ENCODE measurements at regions of chr20 and their contacts with region 1.

Region 1: DNA sequence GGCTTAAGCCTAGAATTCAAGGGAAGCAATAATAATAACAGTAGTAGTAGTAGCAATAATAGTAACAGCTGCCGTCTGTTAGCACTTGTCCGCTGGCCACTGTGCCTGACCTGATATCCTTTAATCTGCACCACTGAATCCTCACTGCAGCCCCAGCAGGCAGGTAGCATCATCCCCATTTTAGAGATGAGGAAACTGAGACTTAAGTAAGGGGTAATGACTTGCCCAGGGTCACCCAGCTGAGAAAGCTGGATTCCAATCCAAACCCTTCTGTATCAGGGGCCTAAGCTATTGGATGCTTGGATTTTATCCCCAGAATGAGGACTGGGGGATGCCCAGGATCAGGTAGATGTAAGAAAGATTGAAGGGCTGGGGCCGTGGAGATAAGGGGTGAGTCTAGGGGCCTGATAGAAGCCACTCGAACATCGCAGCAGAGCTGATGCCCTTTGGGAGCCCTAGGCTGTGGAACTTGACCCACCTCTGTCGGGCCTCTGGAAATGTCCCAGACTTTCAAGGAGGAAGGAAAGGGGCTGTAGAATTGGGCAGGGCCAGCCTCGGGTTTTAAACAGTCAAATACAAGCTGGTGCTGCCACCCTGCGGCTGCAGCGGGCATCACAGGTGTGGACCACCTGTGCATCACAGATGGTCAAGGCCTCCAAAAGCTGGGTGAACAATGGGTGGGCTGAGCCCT is 102.1 kb upstream of the MYL9 start:
- DNase-seq: peak in 8 of 9 donors; percentile 41 to 73 (median 50)
- ATAC-seq: peak; percentile 51
- H3K4me3 ChIP-seq: no peak overlapping the region
- H3K4me3 Mint-ChIP-seq: no peak overlapping the region
- H3K27ac ChIP-seq: no peak overlapping the region
- H3K27ac Mint-ChIP-seq: no peak overlapping the region
- H3K4me1 ChIP-seq: no peaks in the 10 kb centered on the region
- H3K4me1 Mint-ChIP-seq: peaks cover 0 to 8% (median 4%) of the 10 kb centered on the region in 7 donors
- H3K27me3 ChIP-seq: no peaks in the 10 kb centered on the region
- H3K27me3 Mint-ChIP-seq: peaks cover 0 to 15% (median 5%) of the 10 kb centered on the region in 5 donors

Region 2: DNA sequence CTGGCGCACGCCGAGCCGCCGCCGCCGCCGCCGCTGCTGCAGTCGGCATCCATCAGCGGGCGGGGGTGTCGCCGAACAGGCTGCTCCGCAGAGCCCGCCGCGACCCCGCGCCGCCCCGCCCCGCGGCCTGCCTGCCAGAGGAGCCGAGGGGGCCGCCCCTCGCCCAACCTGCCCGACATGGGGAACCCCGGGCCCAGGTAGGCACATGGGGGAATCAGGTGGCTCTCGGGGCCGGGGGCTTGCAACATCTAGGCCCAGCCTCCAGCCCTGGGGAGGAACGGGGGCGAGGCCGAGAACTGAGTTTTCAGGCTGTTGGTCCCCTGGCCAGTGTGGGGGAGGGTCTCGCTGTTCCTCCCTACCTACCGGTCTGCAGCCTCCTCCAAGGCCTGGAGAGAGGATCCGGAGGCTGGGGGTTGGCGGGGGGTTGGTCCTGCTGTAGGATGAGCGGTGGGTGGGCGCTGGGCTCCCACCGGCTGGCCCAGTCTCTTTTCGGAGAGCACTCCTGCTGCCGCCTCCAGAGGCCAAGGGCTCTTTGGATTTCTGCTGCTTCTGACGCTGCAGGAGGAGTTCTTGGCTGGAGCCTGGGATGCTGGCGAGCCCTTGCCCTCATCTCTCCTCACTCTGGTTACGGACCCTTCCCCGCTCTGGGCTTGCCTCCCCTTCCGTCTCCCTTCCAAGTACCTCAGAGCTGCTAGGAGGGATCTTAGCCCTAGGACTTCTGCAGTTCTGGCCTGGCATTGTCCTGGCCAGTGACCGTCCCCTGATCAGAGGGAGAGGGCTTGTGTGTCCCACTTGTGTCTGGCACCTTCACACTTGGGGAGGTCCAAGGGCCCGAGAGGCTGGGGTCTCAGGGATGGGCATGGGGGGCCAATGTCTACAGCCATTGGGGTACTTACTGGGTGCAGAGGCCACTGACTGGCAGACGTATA is 284.2 kb before region 1 on chr20 and contains the start of gene EPB41L1:
- CTCF ChIA-PET with region 1: interaction called, 3 read pairs
- POLR2A ChIA-PET with region 1: no interaction called
- intact Hi-C with region 1: loop called in 1 of 2 experiments (anchors 1 kb)
- DNase-seq: peak in 4 of 9 donors; percentile 6 to 23 (median 14)
- ATAC-seq: peak; percentile 45
- H3K4me3 ChIP-seq: peak within 1 kb of the TSS; percentile 35
- H3K4me3 Mint-ChIP-seq: peak within 1 kb of the TSS; percentile 29 to 81 (median 58)
- H3K27ac ChIP-seq: no peak within 1 kb of the TSS
- H3K27ac Mint-ChIP-seq: no peak within 1 kb of the TSS
- H3K4me1 ChIP-seq: no peaks in the 10 kb centered on the region
- H3K4me1 Mint-ChIP-seq: peaks cover 0 to 8% (median 4%) of the 10 kb centered on the region in 7 donors
- H3K27me3 ChIP-seq: peaks cover 0 to 9% of the 10 kb centered on the region in 2 donors
- H3K27me3 Mint-ChIP-seq: peaks cover 9 to 40% (median 25%) of the 10 kb centered on the region in 5 donors
- total RNA-seq, gene EPB41L1: 0.05 to 0.81 (median 0.74) TPM in 4 of 5 experiments, not detected in the other

Region 3: DNA sequence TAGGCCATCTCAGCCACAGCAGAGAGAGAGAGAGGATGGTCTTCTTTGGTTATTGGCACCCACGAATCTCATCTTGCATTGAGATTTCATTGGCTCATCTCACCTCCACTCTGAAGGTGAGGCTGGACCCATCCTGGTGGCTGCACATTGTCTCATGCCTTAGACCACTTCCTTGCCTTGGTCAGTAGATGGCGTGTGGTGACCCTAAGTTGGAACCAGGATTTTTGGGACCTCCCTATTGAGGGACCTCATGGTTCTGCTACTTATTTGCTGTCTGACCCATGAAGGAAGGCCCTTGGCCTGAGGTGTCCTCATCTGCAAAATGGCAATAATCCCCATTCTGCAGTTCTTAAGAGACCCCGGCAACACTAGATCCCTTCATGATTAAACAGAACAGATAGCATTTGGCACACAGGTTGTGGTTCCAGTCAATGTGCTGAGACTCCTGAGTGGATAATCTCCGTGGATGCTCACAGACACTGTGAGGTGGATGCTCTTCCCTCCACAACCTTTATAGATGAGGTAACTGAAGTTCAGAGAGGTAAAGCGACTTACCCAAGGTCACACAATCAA is 224.4 kb before region 1 on chr20:
- CTCF ChIA-PET with region 1: interaction called, 15 read pairs
- POLR2A ChIA-PET with region 1: no interaction called
- intact Hi-C with region 1: loop called in 1 of 2 experiments (anchors 1 kb)
- DNase-seq: peak in 1 of 9 donors; percentile 18
- ATAC-seq: peak; percentile 42
- H3K4me3 ChIP-seq: no peak overlapping the region
- H3K4me3 Mint-ChIP-seq: no peak overlapping the region
- H3K27ac ChIP-seq: no peak overlapping the region
- H3K27ac Mint-ChIP-seq: no peak overlapping the region
- H3K4me1 ChIP-seq: no peaks in the 10 kb centered on the region
- H3K4me1 Mint-ChIP-seq: no peaks in the 10 kb centered on the region
- H3K27me3 ChIP-seq: no peaks in the 10 kb centered on the region
- H3K27me3 Mint-ChIP-seq: peaks cover 0 to 6% (median 0%) of the 10 kb centered on the region in 5 donors

Region 4: GRCh38 chr20:36273414-36274180 is 165.6 kb before region 1 on chr20:
- CTCF ChIA-PET with region 1: no interaction called
- POLR2A ChIA-PET with region 1: no interaction called
- intact Hi-C with region 1: loop called (anchors 1 to 2 kb)
- DNase-seq: no peak
- ATAC-seq: no peak
- H3K4me3 ChIP-seq: no peak overlapping the region
- H3K4me3 Mint-ChIP-seq: no peak overlapping the region
- H3K27ac ChIP-seq: no peak overlapping the region
- H3K27ac Mint-ChIP-seq: no peak overlapping the region
- H3K4me1 ChIP-seq: no peaks in the 10 kb centered on the region
- H3K4me1 Mint-ChIP-seq: peaks cover 0 to 1% (median 0%) of the 10 kb centered on the region in 7 donors
- H3K27me3 ChIP-seq: no peaks in the 10 kb centered on the region
- H3K27me3 Mint-ChIP-seq: peaks cover 0 to 13% (median 3%) of the 10 kb centered on the region in 5 donors

Region 5: DNA sequence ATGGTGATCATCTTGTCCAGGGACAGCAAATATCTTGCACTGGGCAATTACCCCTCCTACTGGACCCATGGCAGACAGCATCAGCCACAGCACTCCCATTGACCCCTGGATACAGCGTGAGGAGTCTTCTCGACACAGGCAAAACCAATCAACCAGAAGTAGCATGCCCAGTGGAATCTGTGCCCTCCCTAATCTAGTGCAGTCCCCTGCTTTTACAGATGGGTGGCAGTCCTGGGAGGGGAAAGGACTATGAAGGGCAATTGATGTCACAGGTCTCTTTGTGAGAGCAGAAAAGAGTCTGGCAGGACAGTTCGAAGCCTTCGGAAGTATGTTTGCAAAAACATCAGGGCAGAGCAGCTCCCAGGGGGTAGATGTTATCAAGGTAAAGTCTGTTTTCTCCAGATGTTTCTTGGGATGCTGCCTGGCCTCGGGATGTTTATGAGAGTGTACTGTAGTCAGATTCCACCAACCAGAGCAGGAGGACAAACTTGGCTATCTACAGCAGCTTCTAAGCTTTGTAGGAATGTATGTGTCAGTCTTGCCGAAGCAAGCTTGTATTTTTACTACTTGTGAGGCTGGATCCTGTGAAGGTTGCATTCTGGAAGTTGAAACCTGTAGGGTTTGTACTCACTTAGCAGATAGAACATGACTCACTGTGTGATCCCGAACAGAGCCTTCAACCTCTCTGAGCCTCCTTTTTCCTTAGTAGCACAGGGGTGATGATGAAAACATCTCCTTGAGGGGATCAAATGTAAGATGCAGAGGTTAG is 39.1 kb after region 1 on chr20:
- CTCF ChIA-PET with region 1: no interaction called
- POLR2A ChIA-PET with region 1: no interaction called
- intact Hi-C with region 1: no loop called
- DNase-seq: no peak
- ATAC-seq: no peak
- H3K4me3 ChIP-seq: no peak overlapping the region
- H3K4me3 Mint-ChIP-seq: no peak overlapping the region
- H3K27ac ChIP-seq: no peak overlapping the region
- H3K27ac Mint-ChIP-seq: peak overlapping the region in 3 of 9 donors; percentile 14 to 36 (median 30)
- H3K4me1 ChIP-seq: peaks cover 4% of the 10 kb centered on the region in 2 donors
- H3K4me1 Mint-ChIP-seq: peaks cover 31 to 63% (median 57%) of the 10 kb centered on the region in 7 donors
- H3K27me3 ChIP-seq: no peaks in the 10 kb centered on the region
- H3K27me3 Mint-ChIP-seq: no peaks in the 10 kb centered on the region